ENCODE measurements at regions of chr9 and their contacts with region 1.

Region 1: GRCh38 chr9:113657703-113658544 is 194.4 kb downstream of the RGS3 start:
- DNase-seq: peak; percentile 88
- ATAC-seq: peak; percentile 98
- H3K4me3 Mint-ChIP-seq: no peak overlapping the region
- H3K27ac Mint-ChIP-seq: no peak overlapping the region
- H3K4me1 Mint-ChIP-seq: peaks cover 6% of the 10 kb centered on the region
- H3K27me3 Mint-ChIP-seq: peaks cover 7% of the 10 kb centered on the region
- CTCF ChIP-seq: peak; percentile 95

Region 2: GRCh38 chr9:113309204-113309813 is 348.6 kb before region 1 on chr9:
- CTCF ChIA-PET with region 1: interaction called, 13 read pairs
- POLR2A ChIA-PET with region 1: no interaction called
- intact Hi-C with region 1: no loop called
- DNase-seq: peak; percentile 50
- ATAC-seq: peak; percentile 56
- H3K4me3 Mint-ChIP-seq: no peak overlapping the region
- H3K27ac Mint-ChIP-seq: no peak overlapping the region
- H3K4me1 Mint-ChIP-seq: no peaks in the 10 kb centered on the region
- H3K27me3 Mint-ChIP-seq: no peaks in the 10 kb centered on the region
- CTCF ChIP-seq: peak; percentile 79

Region 3: GRCh38 chr9:113446323-113446740 is 211.6 kb before region 1 on chr9:
- CTCF ChIA-PET with region 1: interaction called, 193 read pairs
- POLR2A ChIA-PET with region 1: interaction called, 4 read pairs
- intact Hi-C with region 1: loop called (anchors 2 kb)
- DNase-seq: peak; percentile 35
- ATAC-seq: peak; percentile 58
- H3K4me3 Mint-ChIP-seq: no peak overlapping the region
- H3K27ac Mint-ChIP-seq: peak overlapping the region; percentile 9
- H3K4me1 Mint-ChIP-seq: peaks cover 3% of the 10 kb centered on the region
- H3K27me3 Mint-ChIP-seq: no peaks in the 10 kb centered on the region
- CTCF ChIP-seq: peak; percentile 93

Region 4: GRCh38 chr9:113578882-113579282 is 79.0 kb before region 1 on chr9:
- CTCF ChIA-PET with region 1: interaction called, 621 read pairs
- POLR2A ChIA-PET with region 1: no interaction called
- intact Hi-C with region 1: no loop called
- DNase-seq: peak; percentile 96
- ATAC-seq: peak; percentile 71
- H3K4me3 Mint-ChIP-seq: peak overlapping the region; percentile 85
- H3K27ac Mint-ChIP-seq: peak overlapping the region; percentile 95
- H3K4me1 Mint-ChIP-seq: peaks cover 83% of the 10 kb centered on the region
- H3K27me3 Mint-ChIP-seq: no peaks in the 10 kb centered on the region
- CTCF ChIP-seq: no peak

Region 5: GRCh38 chr9:113622600-113623400 is 35.1 kb before region 1 on chr9:
- CTCF ChIA-PET with region 1: interaction called, 24 read pairs
- POLR2A ChIA-PET with region 1: no interaction called
- intact Hi-C with region 1: no loop called
- DNase-seq: peak; percentile 89
- ATAC-seq: peak; percentile 91
- H3K4me3 Mint-ChIP-seq: peak overlapping the region; percentile 62
- H3K27ac Mint-ChIP-seq: peak overlapping the region; percentile 98
- H3K4me1 Mint-ChIP-seq: peaks cover 50% of the 10 kb centered on the region
- H3K27me3 Mint-ChIP-seq: peaks cover 6% of the 10 kb centered on the region
- CTCF ChIP-seq: no peak

Region 6: GRCh38 chr9:113669522-113670115 is 11.7 kb after region 1 on chr9:
- CTCF ChIA-PET with region 1: interaction called, 54 read pairs
- POLR2A ChIA-PET with region 1: no interaction called
- intact Hi-C with region 1: no loop called
- DNase-seq: no peak
- ATAC-seq: no peak
- H3K4me3 Mint-ChIP-seq: no peak overlapping the region
- H3K27ac Mint-ChIP-seq: no peak overlapping the region
- H3K4me1 Mint-ChIP-seq: no peaks in the 10 kb centered on the region
- H3K27me3 Mint-ChIP-seq: peaks cover 4% of the 10 kb centered on the region
- CTCF ChIP-seq: no peak